Head of caudate nucleus (tissue), 42 donors: ENCODE measurements at regions of chr20 and their contacts with region 1.

Region 1: GRCh38 chr20:56554869-56555268 is 21.8 kb downstream of the FAM209B start:
- DNase-seq: peak in 25 of 42 donors; percentile 4 to 81 (median 35)

Region 2: GRCh38 chr20:57061058-57061900 is 506.4 kb after region 1 on chr20:
- intact Hi-C with region 1: loop called (anchors 10 kb)
- DNase-seq: peak in 36 of 42 donors; percentile 13 to 66 (median 40)

Region 3: GRCh38 chr20:57346477-57346876 is 791.6 kb after region 1 on chr20:
- intact Hi-C with region 1: loop called (anchors 10 kb)
- DNase-seq: peak; percentile 51 to 96 (median 89)